ENCODE measurements at regions of chr10 and their contacts with region 1.

Region 1: DNA sequence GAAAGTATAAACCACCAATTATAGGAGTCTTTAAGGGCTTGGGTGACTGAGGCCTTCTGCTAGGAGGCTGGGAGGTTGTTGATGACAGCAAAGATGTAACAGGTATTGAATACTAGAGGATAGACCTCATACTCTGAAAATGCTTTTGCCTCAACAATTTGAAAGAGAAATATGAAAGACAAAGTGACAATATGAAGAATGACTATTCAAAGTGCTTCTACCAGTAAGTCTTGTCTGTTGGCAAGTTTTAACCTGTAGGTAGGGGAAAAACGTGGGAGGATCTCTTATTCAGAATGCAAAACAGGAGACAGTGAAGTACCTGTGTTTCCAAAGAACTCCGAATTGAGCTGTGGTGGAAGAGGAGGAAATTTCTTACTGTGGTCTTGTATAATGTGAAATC is 38.2 kb downstream of the GBF1 start:
- DNase-seq: no peak
- H3K4me3 Mint-ChIP-seq: peak overlapping the region; percentile 54
- H3K27ac Mint-ChIP-seq: peak overlapping the region; percentile 84
- H3K4me1 Mint-ChIP-seq: peaks cover 67% of the 10 kb centered on the region
- H3K27me3 Mint-ChIP-seq: no peaks in the 10 kb centered on the region

Region 2: GRCh38 chr10:102151774-102152544 is 131.5 kb before region 1 on chr10 and contains the start of gene NOLC1:
- intact Hi-C with region 1: no loop called
- DNase-seq: peak; percentile 100
- H3K4me3 Mint-ChIP-seq: peak within 1 kb of the TSS; percentile 97
- H3K27ac Mint-ChIP-seq: peak within 1 kb of the TSS; percentile 96
- H3K4me1 Mint-ChIP-seq: peaks cover 28% of the 10 kb centered on the region
- H3K27me3 Mint-ChIP-seq: no peaks in the 10 kb centered on the region
- total RNA-seq, gene NOLC1: 195 and 196 TPM in 2 replicates

Region 3: DNA sequence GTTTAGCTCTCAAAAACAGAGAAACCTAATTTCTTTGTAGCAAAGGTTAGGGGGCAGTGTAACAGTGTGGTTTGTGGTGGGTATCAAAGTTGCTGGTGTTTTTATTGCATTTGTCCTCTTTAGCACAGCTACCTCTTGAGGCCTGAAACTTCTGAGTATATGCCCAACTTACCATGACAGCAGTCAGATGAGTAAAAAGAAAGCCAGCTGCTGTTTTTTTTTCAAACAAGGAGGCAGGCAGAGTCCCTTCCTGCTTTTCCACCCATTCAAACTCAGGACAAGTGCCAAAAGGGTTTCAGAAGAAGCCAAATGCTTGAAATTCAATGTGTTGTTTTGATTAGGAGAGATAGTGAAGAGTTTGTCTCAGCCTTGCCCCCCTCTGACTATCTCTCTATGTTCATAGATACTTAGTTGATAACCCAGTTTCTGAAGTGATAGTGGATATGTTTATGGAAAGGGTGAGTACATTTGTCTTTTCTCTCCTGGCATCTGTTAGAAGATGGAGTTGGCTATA is 15.1 kb before region 1 on chr10:
- intact Hi-C with region 1: loop called (anchors 1 kb)
- DNase-seq: no peak
- H3K4me3 Mint-ChIP-seq: no peak overlapping the region
- H3K27ac Mint-ChIP-seq: peak overlapping the region; percentile 78
- H3K4me1 Mint-ChIP-seq: peaks cover 31% of the 10 kb centered on the region
- H3K27me3 Mint-ChIP-seq: no peaks in the 10 kb centered on the region

Region 4: DNA sequence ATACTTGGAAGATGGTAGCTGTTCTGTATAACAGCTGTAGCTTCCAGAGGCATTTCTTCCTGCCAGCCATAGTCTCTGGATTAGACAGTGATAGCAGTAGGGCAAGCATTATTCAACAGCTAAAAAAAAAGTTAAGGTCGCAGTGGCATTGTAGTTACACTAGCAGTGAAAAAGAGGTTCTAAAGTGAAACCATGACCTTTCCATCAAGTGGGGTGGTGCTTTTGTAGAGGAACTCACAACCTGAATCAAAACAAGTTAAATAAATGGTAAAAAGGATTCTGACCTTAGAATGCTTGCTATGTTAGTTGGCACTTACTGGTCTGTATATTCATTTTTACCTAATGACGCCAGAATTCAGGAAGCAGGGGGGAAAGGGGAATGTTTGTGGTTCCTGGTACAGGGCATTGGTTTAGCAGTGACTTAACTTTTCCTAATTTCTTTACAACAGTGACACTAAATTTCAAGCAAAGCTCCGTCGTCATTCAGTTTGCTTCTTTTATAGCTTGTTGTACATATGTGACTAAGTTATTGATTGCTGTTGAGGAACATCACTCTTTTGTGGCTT is 16.9 kb after region 1 on chr10:
- intact Hi-C with region 1: loop called (anchors 2 kb)
- DNase-seq: no peak
- H3K4me3 Mint-ChIP-seq: peak overlapping the region; percentile 13
- H3K27ac Mint-ChIP-seq: peak overlapping the region; percentile 86
- H3K4me1 Mint-ChIP-seq: peaks cover 18% of the 10 kb centered on the region
- H3K27me3 Mint-ChIP-seq: no peaks in the 10 kb centered on the region

Region 5: DNA sequence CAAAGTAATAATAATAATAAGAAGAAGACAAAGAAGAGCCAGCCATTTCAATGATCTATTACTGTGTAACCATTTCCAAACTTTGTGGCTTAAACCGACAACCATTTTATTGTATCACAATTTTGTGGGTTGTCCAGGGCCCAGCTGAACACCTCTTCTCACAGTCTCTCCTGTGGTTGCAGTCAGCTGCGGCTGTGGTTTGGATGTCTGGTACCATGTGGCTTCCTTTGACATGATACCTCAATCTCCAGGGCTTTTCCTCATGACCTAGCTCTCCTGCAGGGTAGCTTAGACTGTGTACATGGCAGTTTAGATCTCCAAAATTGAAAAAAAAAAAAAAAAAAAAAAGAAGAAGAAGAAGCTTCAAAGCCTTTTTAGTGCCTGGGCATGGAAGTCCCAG is 39.4 kb after region 1 on chr10:
- intact Hi-C with region 1: no loop called
- DNase-seq: peak; percentile 50
- H3K4me3 Mint-ChIP-seq: no peak overlapping the region
- H3K27ac Mint-ChIP-seq: no peak overlapping the region
- H3K4me1 Mint-ChIP-seq: peaks cover 18% of the 10 kb centered on the region
- H3K27me3 Mint-ChIP-seq: no peaks in the 10 kb centered on the region

Measured in activated T-helper 2 cell treated with anti-CD3 and anti-CD28 coated beads, Interferon-gamma antibody, Interleukin-2, Interleukin-4, amounts not matched to agents 10 μg/mL and 5 μg/mL and 100 μg/mL, durations not matched to agents 14 hours and 24 hours and 36 hours (primary cell).